ENCODE measurements at regions of chr2 and their contacts with region 1.

Region 1: GRCh38 chr2:156341452-156342253 is 9.1 kb upstream of the NR4A2 start:
- DNase-seq: peak; percentile 94

Region 2: GRCh38 chr2:156400706-156401678 is 59.3 kb after region 1 on chr2:
- intact Hi-C with region 1: loop called (anchors 1 kb)
- DNase-seq: peak; percentile 78

Region 3: DNA sequence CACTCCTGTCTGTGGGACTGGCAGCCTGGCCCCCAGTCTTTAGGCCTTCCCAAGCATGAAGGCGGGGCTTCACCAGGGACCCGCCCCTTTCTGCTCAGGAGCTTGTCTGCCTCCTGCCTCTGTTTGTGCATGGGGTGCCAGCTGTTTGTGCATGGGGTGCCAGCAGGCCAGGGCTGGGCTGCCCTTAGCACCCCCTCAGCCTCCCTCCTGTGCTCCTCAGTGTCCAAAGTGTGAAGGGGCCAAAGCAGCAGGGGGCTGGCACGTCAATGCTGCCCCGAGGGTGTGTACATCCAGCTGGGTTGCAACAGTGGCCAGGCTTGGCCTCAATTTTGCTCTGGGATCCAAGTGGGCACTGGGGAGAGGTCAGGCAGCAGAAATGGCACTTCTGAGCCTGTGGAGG is 617.8 kb after region 1 on chr2:
- intact Hi-C with region 1: no loop called
- DNase-seq: no peak

Measured in cardiac septum (tissue), 1 donor.